CD14-positive monocyte (primary cell): ENCODE measurements at regions of chr17 and their contacts with region 1.

Region 1: DNA sequence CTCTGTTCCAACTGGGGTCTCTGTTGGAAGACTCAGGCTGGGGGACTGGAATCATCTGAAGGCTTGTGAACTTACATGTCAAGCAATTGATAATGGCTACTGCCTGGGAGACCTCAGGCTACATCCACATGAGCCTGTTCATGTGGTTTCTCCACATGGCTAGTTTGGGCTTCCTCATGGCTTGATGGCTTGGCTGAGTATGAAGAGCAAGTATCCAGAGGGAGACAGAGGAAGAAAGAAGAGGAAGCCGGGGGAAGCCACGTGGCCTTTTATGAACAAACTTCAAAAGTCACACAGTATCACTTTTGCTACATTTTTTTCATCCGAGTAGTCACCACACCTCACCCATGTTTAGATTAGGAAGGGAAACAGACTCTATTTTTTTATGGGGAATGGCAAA is 158.9 kb downstream of the TRIM37 start:
- DNase-seq: peak; percentile 45 to 68 (median 67)
- H3K4me3 ChIP-seq: peak overlapping the region in 1 of 3 experiments; percentile 18
- H3K4me3 Mint-ChIP-seq: peak overlapping the region in 1 of 2 donors; percentile 54
- H3K27ac ChIP-seq: peak overlapping the region in 1 of 2 donors; percentile 70
- H3K27ac Mint-ChIP-seq: peak overlapping the region; percentile 36 to 92 (median 82)
- H3K4me1 ChIP-seq: peaks cover 31 to 52% of the 10 kb centered on the region in 2 donors
- H3K4me1 Mint-ChIP-seq: peaks cover 40% of the 10 kb centered on the region
- H3K27me3 ChIP-seq: no peaks in the 10 kb centered on the region
- H3K27me3 Mint-ChIP-seq: no peaks in the 10 kb centered on the region
- CTCF ChIP-seq: no peak

Region 2: GRCh38 chr17:58728786-58729185 is 219.0 kb before region 1 on chr17:
- intact Hi-C with region 1: no loop called
- DNase-seq: no peak
- H3K4me3 ChIP-seq: no peak overlapping the region
- H3K4me3 Mint-ChIP-seq: no peak overlapping the region
- H3K27ac ChIP-seq: no peak overlapping the region
- H3K27ac Mint-ChIP-seq: peak overlapping the region in 1 of 7 donors; percentile 19
- H3K4me1 ChIP-seq: no peaks in the 10 kb centered on the region
- H3K4me1 Mint-ChIP-seq: no peaks in the 10 kb centered on the region
- H3K27me3 ChIP-seq: no peaks in the 10 kb centered on the region
- H3K27me3 Mint-ChIP-seq: no peaks in the 10 kb centered on the region
- CTCF ChIP-seq: no peak

Region 3: DNA sequence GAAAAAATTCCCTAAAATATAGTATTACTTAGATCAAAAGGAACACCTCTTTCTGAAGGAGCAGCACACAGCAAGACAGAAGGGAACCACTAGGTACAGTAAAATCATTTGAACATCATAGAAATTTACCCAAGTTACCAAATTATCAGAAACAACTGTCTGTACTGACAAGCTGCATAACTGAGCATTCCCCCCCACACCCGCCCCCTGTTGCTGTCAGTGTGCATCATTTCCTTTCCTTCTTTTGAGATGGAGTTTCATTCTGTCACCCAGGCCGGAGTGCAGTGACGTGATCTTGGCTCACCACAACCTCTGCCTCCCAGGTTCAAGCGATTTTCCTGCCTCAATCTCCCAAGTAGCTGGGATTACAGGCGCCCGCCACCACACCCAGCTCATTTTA is 38.1 kb after region 1 on chr17:
- intact Hi-C with region 1: loop called (anchors 5 to 10 kb)
- DNase-seq: peak in 2 of 3 donors; percentile 13 to 32
- H3K4me3 ChIP-seq: no peak overlapping the region
- H3K4me3 Mint-ChIP-seq: no peak overlapping the region
- H3K27ac ChIP-seq: no peak overlapping the region
- H3K27ac Mint-ChIP-seq: no peak overlapping the region
- H3K4me1 ChIP-seq: peaks cover 11 to 27% of the 10 kb centered on the region in 2 donors
- H3K4me1 Mint-ChIP-seq: peaks cover 16% of the 10 kb centered on the region
- H3K27me3 ChIP-seq: no peaks in the 10 kb centered on the region
- H3K27me3 Mint-ChIP-seq: peaks cover 0 to 2% (median 0%) of the 10 kb centered on the region in 3 donors
- CTCF ChIP-seq: no peak

Region 4: GRCh38 chr17:58991718-58992331 is 44.0 kb after region 1 on chr17:
- intact Hi-C with region 1: loop called (anchors 5 to 10 kb)
- DNase-seq: no peak
- H3K4me3 ChIP-seq: no peak overlapping the region
- H3K4me3 Mint-ChIP-seq: no peak overlapping the region
- H3K27ac ChIP-seq: no peak overlapping the region
- H3K27ac Mint-ChIP-seq: no peak overlapping the region
- H3K4me1 ChIP-seq: peaks cover 20% of the 10 kb centered on the region in 2 donors
- H3K4me1 Mint-ChIP-seq: peaks cover 17% of the 10 kb centered on the region
- H3K27me3 ChIP-seq: no peaks in the 10 kb centered on the region
- H3K27me3 Mint-ChIP-seq: peaks cover 0 to 4% (median 2%) of the 10 kb centered on the region in 3 donors
- CTCF ChIP-seq: no peak

Region 5: GRCh38 chr17:59067756-59068155 is 119.9 kb after region 1 on chr17:
- intact Hi-C with region 1: no loop called
- DNase-seq: no peak
- H3K4me3 ChIP-seq: no peak overlapping the region
- H3K4me3 Mint-ChIP-seq: no peak overlapping the region
- H3K27ac ChIP-seq: no peak overlapping the region
- H3K27ac Mint-ChIP-seq: no peak overlapping the region
- H3K4me1 ChIP-seq: no peaks in the 10 kb centered on the region
- H3K4me1 Mint-ChIP-seq: no peaks in the 10 kb centered on the region
- H3K27me3 ChIP-seq: no peaks in the 10 kb centered on the region
- H3K27me3 Mint-ChIP-seq: no peaks in the 10 kb centered on the region
- CTCF ChIP-seq: no peak

Region 6: DNA sequence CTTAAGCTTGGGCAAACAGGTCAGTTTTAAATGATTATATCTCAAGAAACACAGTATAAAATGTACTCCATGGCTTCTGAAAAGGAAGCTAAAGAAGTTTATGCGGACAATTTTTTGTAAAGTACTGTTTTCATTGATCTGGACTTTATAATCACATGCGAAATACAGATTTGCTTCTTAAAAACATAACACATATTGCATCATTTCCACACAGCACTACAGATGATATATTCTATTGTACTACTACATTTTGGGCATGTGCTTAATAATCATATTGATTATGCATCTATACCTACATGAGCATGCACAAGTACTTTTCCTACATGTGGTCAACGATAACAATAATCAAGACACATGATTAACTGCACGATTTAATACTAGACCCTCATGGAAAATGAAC is 136.3 kb after region 1 on chr17:
- intact Hi-C with region 1: no loop called
- DNase-seq: no peak
- H3K4me3 ChIP-seq: no peak overlapping the region
- H3K4me3 Mint-ChIP-seq: no peak overlapping the region
- H3K27ac ChIP-seq: no peak overlapping the region
- H3K27ac Mint-ChIP-seq: no peak overlapping the region
- H3K4me1 ChIP-seq: no peaks in the 10 kb centered on the region
- H3K4me1 Mint-ChIP-seq: peaks cover 6% of the 10 kb centered on the region
- H3K27me3 ChIP-seq: no peaks in the 10 kb centered on the region
- H3K27me3 Mint-ChIP-seq: no peaks in the 10 kb centered on the region
- CTCF ChIP-seq: no peak